Activated B cell treated with CpG ODN at 0.5 μM for 24 hours (primary cell): ENCODE measurements at regions of chr13 and their contacts with region 1.

Region 1: DNA sequence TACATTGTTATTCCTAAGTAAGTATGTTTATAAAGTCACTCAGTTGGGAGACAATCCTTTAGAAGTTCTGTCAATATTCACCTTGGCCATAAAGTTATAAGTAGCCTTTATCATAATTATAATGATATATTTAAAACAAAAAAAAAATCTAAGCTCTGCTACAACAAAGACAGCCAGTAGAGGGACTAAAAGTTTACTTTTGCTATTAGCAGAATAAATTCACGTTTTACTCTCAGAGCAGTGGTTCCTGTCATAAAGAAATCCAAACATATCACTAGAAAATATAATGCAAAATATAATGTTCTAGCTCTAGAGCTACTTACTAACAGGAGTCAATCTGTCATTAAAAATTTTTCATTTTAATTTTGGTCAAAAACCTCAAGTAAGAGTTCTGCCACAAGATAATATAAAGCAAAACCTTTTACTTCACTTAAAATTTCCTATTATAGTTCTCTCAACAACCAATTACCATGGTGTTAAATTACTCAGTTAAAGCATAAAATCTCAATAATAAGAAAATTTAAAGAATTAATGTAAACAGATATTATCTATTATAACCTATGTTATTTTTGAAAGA is 17.7 kb downstream of the INTS6 start:
- DNase-seq: no peak
- ATAC-seq: peak; percentile 50
- H3K4me3 Mint-ChIP-seq: no peak overlapping the region
- H3K27ac Mint-ChIP-seq: no peak overlapping the region
- H3K4me1 Mint-ChIP-seq: peaks cover 3% of the 10 kb centered on the region
- H3K27me3 Mint-ChIP-seq: no peaks in the 10 kb centered on the region
- CTCF ChIP-seq: peak; percentile 46

Region 2: DNA sequence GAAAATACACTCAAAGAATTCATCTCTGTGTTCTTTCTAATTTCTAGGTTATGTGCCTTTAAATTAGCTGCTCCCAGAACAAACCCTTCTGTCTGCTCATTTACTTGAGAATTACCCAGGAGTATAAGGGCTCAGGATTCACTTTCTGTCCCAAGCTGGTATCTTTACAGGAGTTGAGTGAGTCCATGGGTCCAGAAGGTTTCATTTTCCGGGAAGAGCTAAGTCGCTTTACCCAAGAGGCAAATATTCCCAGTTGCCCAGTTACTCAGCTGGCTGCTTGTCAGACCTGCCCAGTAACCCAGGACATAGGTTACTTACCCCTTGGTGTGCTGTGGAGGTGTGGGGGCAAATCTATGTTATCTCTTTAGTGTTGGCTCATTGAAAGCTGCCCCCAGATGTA is 321.6 kb after region 1 on chr13:
- CTCF ChIA-PET with region 1: no interaction called
- POLR2A ChIA-PET with region 1: no interaction called
- intact Hi-C with region 1: no loop called
- DNase-seq: no peak
- ATAC-seq: no peak
- H3K4me3 Mint-ChIP-seq: no peak overlapping the region
- H3K27ac Mint-ChIP-seq: no peak overlapping the region
- H3K4me1 Mint-ChIP-seq: no peaks in the 10 kb centered on the region
- H3K27me3 Mint-ChIP-seq: no peaks in the 10 kb centered on the region
- CTCF ChIP-seq: no peak

Region 3: DNA sequence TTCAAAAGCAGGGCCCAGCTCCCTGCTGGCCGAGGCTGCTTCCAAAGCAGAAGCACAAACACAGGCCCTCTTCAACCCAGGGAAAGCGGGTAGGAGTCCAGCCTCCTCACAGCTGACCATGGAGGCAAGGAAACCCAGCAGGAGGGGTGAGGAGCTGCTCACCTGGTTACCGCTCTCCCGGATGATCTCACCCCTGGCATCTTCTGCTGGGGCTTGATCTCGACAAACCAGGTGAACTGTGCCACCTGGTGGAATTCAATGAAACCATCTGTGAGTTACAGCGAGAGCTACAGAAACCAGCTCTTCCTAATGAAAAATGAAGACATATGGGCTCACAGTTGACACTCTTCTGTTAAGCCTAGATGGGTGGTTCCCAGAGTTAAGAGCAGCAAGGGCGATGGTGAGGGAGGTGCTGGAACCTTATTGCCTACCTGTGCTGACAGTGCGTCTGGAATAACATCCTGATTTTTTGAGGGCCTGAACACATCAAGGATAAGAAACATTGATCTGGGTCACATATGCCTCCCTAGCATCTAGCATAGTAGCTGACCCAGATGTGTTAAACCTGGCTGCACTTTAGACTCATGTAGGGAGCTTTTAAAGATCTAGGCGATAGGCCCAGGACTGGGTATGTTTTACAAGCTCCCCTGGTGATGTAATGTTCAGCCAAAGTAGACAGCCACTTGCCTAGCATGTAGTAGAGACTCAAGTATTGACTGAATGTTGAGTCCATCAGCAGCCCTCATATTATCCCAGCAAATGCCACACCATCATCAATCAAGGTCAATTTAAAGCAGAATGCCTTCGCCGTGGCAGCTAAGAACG is 362.8 kb after region 1 on chr13:
- CTCF ChIA-PET with region 1: interaction called, 88 read pairs
- POLR2A ChIA-PET with region 1: interaction called, 4 read pairs
- intact Hi-C with region 1: loop called (anchors 1 kb)
- DNase-seq: no peak
- ATAC-seq: peak; percentile 45
- H3K4me3 Mint-ChIP-seq: no peak overlapping the region
- H3K27ac Mint-ChIP-seq: no peak overlapping the region
- H3K4me1 Mint-ChIP-seq: peaks cover 47% of the 10 kb centered on the region
- H3K27me3 Mint-ChIP-seq: no peaks in the 10 kb centered on the region
- CTCF ChIP-seq: no peak

Region 4: GRCh38 chr13:51832471-51833152 is 397.5 kb after region 1 on chr13:
- CTCF ChIA-PET with region 1: interaction called, 5 read pairs
- POLR2A ChIA-PET with region 1: no interaction called
- intact Hi-C with region 1: loop called (anchors 1 kb)
- DNase-seq: no peak
- ATAC-seq: peak; percentile 97
- H3K4me3 Mint-ChIP-seq: no peak overlapping the region
- H3K27ac Mint-ChIP-seq: no peak overlapping the region
- H3K4me1 Mint-ChIP-seq: peaks cover 31% of the 10 kb centered on the region
- H3K27me3 Mint-ChIP-seq: peaks cover 7% of the 10 kb centered on the region
- CTCF ChIP-seq: no peak